Caco-2 (cell line): ENCODE measurements at regions of chr12 and their contacts with region 1.

Region 1: GRCh38 chr12:27919671-27920235 is 52.8 kb downstream of the PTHLH start:
- DNase-seq: no peak
- H3K4me3 ChIP-seq: no peak overlapping the region
- H3K4me3 Mint-ChIP-seq: no peak overlapping the region
- H3K27ac Mint-ChIP-seq: no peak overlapping the region
- H3K4me1 ChIP-seq: peaks cover 19% of the 10 kb centered on the region
- H3K4me1 Mint-ChIP-seq: peaks cover 21% of the 10 kb centered on the region
- H3K27me3 ChIP-seq: no peaks in the 10 kb centered on the region
- H3K27me3 Mint-ChIP-seq: no peaks in the 10 kb centered on the region
- CTCF ChIP-seq: no peak

Region 2: GRCh38 chr12:27899151-27899661 is 20.5 kb before region 1 on chr12:
- CTCF ChIA-PET with region 1: no interaction called
- POLR2A ChIA-PET with region 1: no interaction called
- intact Hi-C with region 1: loop called (anchors 2 kb)
- DNase-seq: peak; percentile 56 to 58
- H3K4me3 ChIP-seq: no peak overlapping the region
- H3K4me3 Mint-ChIP-seq: no peak overlapping the region
- H3K27ac Mint-ChIP-seq: peak overlapping the region; percentile 24
- H3K4me1 ChIP-seq: peaks cover 32% of the 10 kb centered on the region
- H3K4me1 Mint-ChIP-seq: peaks cover 22% of the 10 kb centered on the region
- H3K27me3 ChIP-seq: 0 out of 2 replicates have a peak, but pooled peaks cover 2% of the 10 kb centered on the region
- H3K27me3 Mint-ChIP-seq: no peaks in the 10 kb centered on the region
- CTCF ChIP-seq: no peak

Region 3: GRCh38 chr12:27984275-27984674 is 64.5 kb after region 1 on chr12:
- CTCF ChIA-PET with region 1: no interaction called
- POLR2A ChIA-PET with region 1: no interaction called
- intact Hi-C with region 1: no loop called
- DNase-seq: no peak
- H3K4me3 ChIP-seq: no peak overlapping the region
- H3K4me3 Mint-ChIP-seq: no peak overlapping the region
- H3K27ac Mint-ChIP-seq: no peak overlapping the region
- H3K4me1 ChIP-seq: no peaks in the 10 kb centered on the region
- H3K4me1 Mint-ChIP-seq: no peaks in the 10 kb centered on the region
- H3K27me3 ChIP-seq: no peaks in the 10 kb centered on the region; the same call in 1 of the 2 replicates
- H3K27me3 Mint-ChIP-seq: peaks cover 8% of the 10 kb centered on the region
- CTCF ChIP-seq: no peak